IMR-90 (cell line): ENCODE measurements at regions of chr11 and their contacts with region 1.

Region 1: GRCh38 chr11:100890789-100891188 is 203.7 kb downstream of the ARHGAP42 start:
- DNase-seq: peak; percentile 98
- ATAC-seq: peak; percentile 96
- H3K4me3 ChIP-seq: no peak overlapping the region
- H3K27ac ChIP-seq: peak overlapping the region; percentile 73; the same call in 1 of the 2 replicates
- H3K4me1 ChIP-seq: peaks cover 6% of the 10 kb centered on the region
- H3K27me3 ChIP-seq: no peaks in the 10 kb centered on the region
- CTCF ChIP-seq: no peak
- POLR2A ChIP-seq: no peak
- RAD21 ChIP-seq: no peak

Region 2: GRCh38 chr11:99443276-99443675 is 1447.5 kb before region 1 on chr11:
- CTCF ChIA-PET with region 1: no interaction called
- POLR2A ChIA-PET with region 1: interaction called, 11 read pairs
- dilution Hi-C with region 1: no loop called
- in situ Hi-C with region 1: no loop called
- intact Hi-C with region 1: no loop called
- DNase-seq: no peak
- ATAC-seq: no peak
- H3K4me3 ChIP-seq: no peak overlapping the region
- H3K27ac ChIP-seq: no peak overlapping the region
- H3K4me1 ChIP-seq: no peaks in the 10 kb centered on the region
- H3K27me3 ChIP-seq: no peaks in the 10 kb centered on the region
- CTCF ChIP-seq: no peak
- POLR2A ChIP-seq: no peak
- RAD21 ChIP-seq: no peak

Region 3: DNA sequence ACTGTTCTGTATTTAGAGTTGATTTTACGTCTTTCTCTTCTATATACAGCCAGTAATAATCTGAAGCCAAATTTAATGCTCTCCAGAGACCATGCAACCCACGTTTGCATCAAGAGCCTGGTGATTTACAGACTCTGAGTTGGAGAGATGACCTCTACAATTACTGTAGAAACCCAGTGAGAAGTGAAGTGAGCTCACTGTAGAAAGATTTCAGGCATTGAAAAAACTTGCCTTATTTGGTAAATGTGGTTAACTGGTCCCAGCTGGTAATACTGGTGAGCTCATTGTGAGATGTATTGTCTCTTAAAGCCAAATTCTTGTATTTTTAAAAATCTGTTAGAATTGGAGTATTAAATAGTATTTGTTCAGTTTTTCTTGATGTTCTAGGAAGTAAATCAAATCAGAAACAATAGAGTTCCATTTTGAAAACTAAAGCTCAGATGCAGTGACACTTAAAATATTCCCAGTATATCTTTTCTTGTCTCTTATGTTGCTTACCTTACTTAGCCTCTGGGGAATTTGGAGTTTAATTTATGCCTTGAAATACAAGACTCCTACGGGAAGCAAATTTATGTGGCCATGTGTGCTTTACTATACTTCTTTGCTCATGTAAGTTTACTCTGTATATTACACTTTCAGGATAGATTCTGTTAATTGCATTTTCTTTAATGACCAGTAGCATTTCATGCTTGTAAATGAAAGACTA is 13.8 kb before region 1 on chr11:
- CTCF ChIA-PET with region 1: no interaction called
- POLR2A ChIA-PET with region 1: interaction called, 5 read pairs
- dilution Hi-C with region 1: no loop called
- in situ Hi-C with region 1: no loop called
- intact Hi-C with region 1: loop called (anchors 2 kb)
- DNase-seq: peak; percentile 98
- ATAC-seq: peak; percentile 94
- H3K4me3 ChIP-seq: no peak overlapping the region
- H3K27ac ChIP-seq: peak overlapping the region; percentile 100; the same call in 1 of the 2 replicates
- H3K4me1 ChIP-seq: peaks cover 19% of the 10 kb centered on the region
- H3K27me3 ChIP-seq: no peaks in the 10 kb centered on the region
- CTCF ChIP-seq: no peak
- POLR2A ChIP-seq: 0 out of 2 replicates have a peak, but pooled peaks have one; percentile 46
- RAD21 ChIP-seq: no peak

Region 4: GRCh38 chr11:101241160-101241795 is 350.5 kb after region 1 on chr11:
- CTCF ChIA-PET with region 1: no interaction called
- POLR2A ChIA-PET with region 1: no interaction called
- dilution Hi-C with region 1: no loop called
- in situ Hi-C with region 1: no loop called
- intact Hi-C with region 1: no loop called
- DNase-seq: no peak
- ATAC-seq: no peak
- H3K4me3 ChIP-seq: no peak overlapping the region
- H3K27ac ChIP-seq: no peak overlapping the region
- H3K4me1 ChIP-seq: no peaks in the 10 kb centered on the region
- H3K27me3 ChIP-seq: no peaks in the 10 kb centered on the region
- CTCF ChIP-seq: no peak
- POLR2A ChIP-seq: no peak
- RAD21 ChIP-seq: no peak